ENCODE measurements at regions of chr1 and their contacts with region 1.

Region 1: GRCh38 chr1:26787706-26788514 is at the start of gene PIGV:
- DNase-seq: peak; percentile 93
- ATAC-seq: peak; percentile 48
- H3K4me3 Mint-ChIP-seq: peak within 1 kb of the TSS; percentile 82
- H3K27ac Mint-ChIP-seq: peak within 1 kb of the TSS; percentile 99
- H3K4me1 Mint-ChIP-seq: peaks cover 55% of the 10 kb centered on the region
- H3K27me3 Mint-ChIP-seq: no peaks in the 10 kb centered on the region
- total RNA-seq, gene PIGV: 12.0 to 17.2 TPM

Region 2: DNA sequence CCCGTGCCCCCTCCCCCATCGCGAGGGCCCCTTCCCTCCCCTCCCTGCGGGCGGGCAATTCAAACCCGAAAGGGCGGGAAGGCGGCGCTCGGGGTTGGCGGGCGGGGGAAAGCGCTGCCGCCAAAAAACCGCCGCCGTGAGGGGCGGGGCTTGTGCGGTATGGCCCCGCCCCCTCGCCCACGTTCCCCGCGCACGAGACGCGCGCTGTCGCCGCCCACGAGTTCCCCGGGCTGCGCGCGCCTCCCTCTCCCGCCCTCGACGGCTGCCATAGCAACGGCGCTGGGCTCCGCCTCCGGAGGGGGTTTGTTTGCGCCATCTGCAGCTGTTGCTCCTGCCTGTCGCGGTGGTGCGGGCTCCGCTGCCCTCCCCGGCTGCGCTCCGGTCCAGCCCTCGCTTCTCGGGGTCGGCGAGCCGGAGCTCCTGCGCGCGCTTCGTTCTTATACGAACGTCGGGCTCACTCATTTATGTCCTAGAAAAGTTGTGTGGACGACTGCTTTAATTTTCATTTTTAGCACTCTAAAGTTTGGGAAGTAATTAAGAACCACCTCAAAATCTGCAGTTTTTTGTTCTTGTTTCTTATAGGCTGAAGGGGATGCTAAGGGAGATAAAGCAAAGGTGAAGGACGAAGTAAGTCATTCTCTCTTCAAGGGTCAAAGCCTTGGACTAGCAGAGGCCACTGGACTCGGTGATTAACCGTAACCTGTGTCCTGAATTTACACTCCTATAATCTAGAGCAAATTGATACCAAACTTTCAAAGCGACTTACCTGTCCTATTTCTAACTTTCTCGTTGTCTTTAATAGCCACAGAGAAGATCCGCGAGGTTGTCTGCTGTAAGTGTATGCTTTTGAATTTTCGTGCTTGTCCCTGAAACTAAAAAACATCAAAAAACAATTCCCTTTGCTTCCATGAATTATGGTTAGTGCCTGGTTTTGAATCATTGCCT is 314.7 kb before region 1 on chr1:
- CTCF ChIA-PET with region 1: interaction called, 3 read pairs
- POLR2A ChIA-PET with region 1: interaction called, 3 read pairs
- intact Hi-C with region 1: loop called in 1 of 2 experiments (anchors 1 kb)
- DNase-seq: peak; percentile 97
- ATAC-seq: peak; percentile 62
- H3K4me3 Mint-ChIP-seq: peak overlapping the region; percentile 91
- H3K27ac Mint-ChIP-seq: peak overlapping the region; percentile 43
- H3K4me1 Mint-ChIP-seq: peaks cover 50% of the 10 kb centered on the region
- H3K27me3 Mint-ChIP-seq: no peaks in the 10 kb centered on the region

Region 3: DNA sequence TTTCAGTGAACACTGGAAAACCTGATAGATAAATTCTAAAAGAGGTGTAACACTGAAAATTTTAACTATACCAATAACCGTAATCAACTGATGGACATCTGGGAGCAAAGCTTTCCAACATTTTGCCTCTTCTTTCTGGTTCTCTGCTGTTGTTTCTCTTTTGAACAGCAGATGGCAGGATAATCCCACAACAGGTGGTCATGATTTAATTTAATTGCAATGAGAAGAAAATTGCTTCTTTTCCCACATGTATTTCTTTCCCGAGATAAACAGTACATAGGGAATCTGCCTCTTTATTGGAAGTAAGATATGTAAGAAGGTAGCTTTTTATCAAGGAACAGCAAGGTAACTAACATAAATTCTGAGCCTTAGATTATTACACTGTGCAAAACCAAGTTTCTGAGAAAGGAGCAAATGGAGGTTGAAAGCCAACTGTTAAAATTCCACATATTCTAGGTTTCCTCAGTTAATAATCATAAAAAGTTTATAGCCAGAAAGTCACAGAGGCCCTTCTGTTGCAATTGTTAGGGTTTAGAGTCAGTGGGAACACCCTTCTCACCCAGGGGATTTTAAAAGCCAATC is 185.4 kb before region 1 on chr1:
- CTCF ChIA-PET with region 1: interaction called, 180 read pairs
- POLR2A ChIA-PET with region 1: interaction called, 3 read pairs
- intact Hi-C with region 1: loop called (anchors 1 kb)
- DNase-seq: peak; percentile 45
- ATAC-seq: peak; percentile 63
- H3K4me3 Mint-ChIP-seq: no peak overlapping the region
- H3K27ac Mint-ChIP-seq: no peak overlapping the region
- H3K4me1 Mint-ChIP-seq: peaks cover 3% of the 10 kb centered on the region
- H3K27me3 Mint-ChIP-seq: no peaks in the 10 kb centered on the region

Region 4: DNA sequence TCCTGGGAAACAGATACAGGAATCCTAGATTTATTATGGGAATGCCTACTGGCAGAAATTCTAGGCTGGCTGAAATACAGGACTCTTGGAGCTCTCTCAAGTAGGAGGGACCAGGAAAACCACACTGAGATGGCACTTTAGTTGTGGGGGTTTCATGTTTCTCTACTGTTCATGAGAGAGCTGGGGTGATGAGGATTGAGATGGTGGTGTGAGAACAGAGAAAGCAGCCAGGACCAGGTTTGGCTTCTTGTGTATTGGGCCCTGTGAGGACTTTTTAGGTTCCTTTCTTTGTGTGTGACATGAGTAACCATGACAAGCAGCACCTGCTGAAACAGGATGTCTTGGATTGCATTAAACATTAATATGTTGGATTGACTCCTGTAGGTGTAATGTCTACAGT is 87.2 kb before region 1 on chr1:
- CTCF ChIA-PET with region 1: interaction called, 41 read pairs
- POLR2A ChIA-PET with region 1: interaction called, 83 read pairs
- intact Hi-C with region 1: loop called in 1 of 2 experiments (anchors 1 kb)
- DNase-seq: no peak
- ATAC-seq: no peak
- H3K4me3 Mint-ChIP-seq: no peak overlapping the region
- H3K27ac Mint-ChIP-seq: no peak overlapping the region
- H3K4me1 Mint-ChIP-seq: peaks cover 10% of the 10 kb centered on the region
- H3K27me3 Mint-ChIP-seq: no peaks in the 10 kb centered on the region

Region 5: DNA sequence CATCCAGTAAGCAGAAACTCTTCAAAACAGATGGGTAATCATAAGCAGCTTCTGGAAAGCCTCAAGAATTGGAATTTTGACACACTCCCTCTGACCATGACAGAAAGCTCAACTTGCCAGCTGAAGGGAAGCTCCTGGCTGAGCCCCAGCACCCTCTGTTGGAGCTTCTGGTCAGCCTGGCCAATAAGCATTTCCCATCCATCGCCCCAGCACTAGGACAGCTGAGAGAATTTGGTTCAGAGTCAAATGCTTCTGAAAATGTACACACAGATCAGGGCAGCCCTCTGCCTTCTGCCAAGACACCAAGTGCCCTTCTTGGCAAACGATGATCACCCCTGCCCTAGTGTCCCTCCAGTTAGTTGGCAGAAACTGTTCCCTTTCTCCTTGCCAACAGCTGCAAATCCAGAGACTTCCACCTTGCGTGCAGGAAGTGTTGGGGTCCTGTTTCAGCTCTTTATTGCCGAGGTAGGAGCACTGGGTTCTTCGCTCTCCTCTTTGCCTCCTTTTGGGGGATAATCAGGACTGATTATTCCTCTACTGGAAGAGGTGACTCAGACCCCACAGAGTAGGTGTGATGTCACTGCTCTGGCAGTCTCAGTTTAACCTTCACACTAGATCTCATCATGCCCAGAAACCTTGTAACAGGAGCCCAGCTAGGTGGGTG is 11.7 kb after region 1 on chr1:
- CTCF ChIA-PET with region 1: interaction called, 38 read pairs
- POLR2A ChIA-PET with region 1: no interaction called
- intact Hi-C with region 1: no loop called
- DNase-seq: peak; percentile 48
- ATAC-seq: peak; percentile 78
- H3K4me3 Mint-ChIP-seq: no peak overlapping the region
- H3K27ac Mint-ChIP-seq: peak overlapping the region; percentile 90
- H3K4me1 Mint-ChIP-seq: peaks cover 37% of the 10 kb centered on the region
- H3K27me3 Mint-ChIP-seq: no peaks in the 10 kb centered on the region

Region 6: GRCh38 chr1:26864610-26865527 is 77.0 kb after region 1 on chr1:
- CTCF ChIA-PET with region 1: interaction called, 23 read pairs
- POLR2A ChIA-PET with region 1: interaction called, 5 read pairs
- intact Hi-C with region 1: loop called in 1 of 2 experiments (anchors 1 kb)
- DNase-seq: peak; percentile 97
- ATAC-seq: peak; percentile 94
- H3K4me3 Mint-ChIP-seq: peak overlapping the region; percentile 89
- H3K27ac Mint-ChIP-seq: peak overlapping the region; percentile 96
- H3K4me1 Mint-ChIP-seq: peaks cover 22% of the 10 kb centered on the region
- H3K27me3 Mint-ChIP-seq: no peaks in the 10 kb centered on the region

Region 7: GRCh38 chr1:26949926-26950319 is 162.0 kb after region 1 on chr1:
- CTCF ChIA-PET with region 1: no interaction called
- POLR2A ChIA-PET with region 1: no interaction called
- intact Hi-C with region 1: no loop called
- DNase-seq: no peak
- ATAC-seq: no peak
- H3K4me3 Mint-ChIP-seq: no peak overlapping the region
- H3K27ac Mint-ChIP-seq: no peak overlapping the region
- H3K4me1 Mint-ChIP-seq: no peaks in the 10 kb centered on the region
- H3K27me3 Mint-ChIP-seq: no peaks in the 10 kb centered on the region

Region 8: GRCh38 chr1:27203946-27204345 is 416.0 kb after region 1 on chr1:
- CTCF ChIA-PET with region 1: no interaction called
- POLR2A ChIA-PET with region 1: no interaction called
- intact Hi-C with region 1: no loop called
- DNase-seq: no peak
- ATAC-seq: no peak
- H3K4me3 Mint-ChIP-seq: no peak overlapping the region
- H3K27ac Mint-ChIP-seq: no peak overlapping the region
- H3K4me1 Mint-ChIP-seq: no peaks in the 10 kb centered on the region
- H3K27me3 Mint-ChIP-seq: no peaks in the 10 kb centered on the region

Region 9: GRCh38 chr1:27306892-27307761 is 519.2 kb after region 1 on chr1:
- CTCF ChIA-PET with region 1: no interaction called
- POLR2A ChIA-PET with region 1: no interaction called
- intact Hi-C with region 1: no loop called
- DNase-seq: no peak
- ATAC-seq: no peak
- H3K4me3 Mint-ChIP-seq: no peak overlapping the region
- H3K27ac Mint-ChIP-seq: no peak overlapping the region
- H3K4me1 Mint-ChIP-seq: no peaks in the 10 kb centered on the region
- H3K27me3 Mint-ChIP-seq: no peaks in the 10 kb centered on the region

Region 10: GRCh38 chr1:27496604-27497155 is 708.8 kb after region 1 on chr1:
- CTCF ChIA-PET with region 1: no interaction called
- POLR2A ChIA-PET with region 1: no interaction called
- intact Hi-C with region 1: no loop called
- DNase-seq: no peak
- ATAC-seq: no peak
- H3K4me3 Mint-ChIP-seq: no peak overlapping the region
- H3K27ac Mint-ChIP-seq: no peak overlapping the region
- H3K4me1 Mint-ChIP-seq: peaks cover 11% of the 10 kb centered on the region
- H3K27me3 Mint-ChIP-seq: no peaks in the 10 kb centered on the region

Region 11: DNA sequence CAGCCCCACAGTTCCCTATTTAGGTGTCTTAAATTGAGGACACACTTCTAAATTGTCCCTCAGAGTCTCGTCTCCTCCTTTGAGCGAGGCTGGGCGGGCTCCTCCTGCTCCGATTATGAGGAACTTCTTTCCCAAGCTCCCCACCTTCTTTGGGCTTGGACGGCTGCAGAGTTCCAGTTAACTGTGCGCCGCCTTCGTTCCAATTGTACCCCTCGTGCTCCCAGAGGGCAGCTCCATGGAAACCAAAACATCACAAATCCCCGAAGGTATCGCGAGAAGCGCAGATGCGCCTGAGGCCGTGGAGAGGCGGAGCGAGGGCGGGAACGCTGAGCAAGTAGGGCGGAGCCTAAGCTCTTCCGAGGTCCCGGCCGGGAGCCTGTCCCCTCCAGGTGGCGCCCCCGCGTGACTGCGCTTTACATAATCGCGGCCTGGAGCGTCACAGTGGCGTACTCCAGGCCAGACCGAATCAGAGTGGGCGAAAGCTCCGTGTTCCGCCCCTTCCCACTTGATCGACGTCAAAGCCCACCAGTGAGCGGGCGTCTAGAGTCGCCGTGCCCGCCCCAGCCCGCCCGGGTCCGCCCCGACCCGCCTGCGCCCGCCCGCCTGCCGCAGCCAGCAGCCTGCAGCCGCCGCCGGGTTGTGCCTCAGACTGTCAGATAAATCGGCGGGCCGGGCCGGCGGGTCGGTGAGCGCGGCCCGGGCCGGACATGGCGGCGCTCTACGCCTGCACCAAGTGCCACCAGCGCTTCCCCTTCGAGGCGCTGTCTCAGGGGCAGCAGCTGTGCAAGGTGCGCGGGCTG is 937.7 kb after region 1 on chr1 and contains the start of gene FAM76A:
- CTCF ChIA-PET with region 1: no interaction called
- POLR2A ChIA-PET with region 1: no interaction called
- intact Hi-C with region 1: loop called in 1 of 2 experiments (anchors 5 kb)
- DNase-seq: peak; percentile 100
- ATAC-seq: peak; percentile 95
- H3K4me3 Mint-ChIP-seq: peak within 1 kb of the TSS; percentile 78
- H3K27ac Mint-ChIP-seq: peak within 1 kb of the TSS; percentile 93
- H3K4me1 Mint-ChIP-seq: peaks cover 15% of the 10 kb centered on the region
- H3K27me3 Mint-ChIP-seq: no peaks in the 10 kb centered on the region
- total RNA-seq, gene FAM76A: 7.4 to 8.1 TPM

Measured in activated CD4-positive, alpha-beta T cell treated with anti-CD3 and anti-CD28 coated beads for 36 hours (primary cell).